Heart right ventricle (tissue), 16 donors: ENCODE measurements at regions of chr2 and their contacts with region 1.

Region 1: DNA sequence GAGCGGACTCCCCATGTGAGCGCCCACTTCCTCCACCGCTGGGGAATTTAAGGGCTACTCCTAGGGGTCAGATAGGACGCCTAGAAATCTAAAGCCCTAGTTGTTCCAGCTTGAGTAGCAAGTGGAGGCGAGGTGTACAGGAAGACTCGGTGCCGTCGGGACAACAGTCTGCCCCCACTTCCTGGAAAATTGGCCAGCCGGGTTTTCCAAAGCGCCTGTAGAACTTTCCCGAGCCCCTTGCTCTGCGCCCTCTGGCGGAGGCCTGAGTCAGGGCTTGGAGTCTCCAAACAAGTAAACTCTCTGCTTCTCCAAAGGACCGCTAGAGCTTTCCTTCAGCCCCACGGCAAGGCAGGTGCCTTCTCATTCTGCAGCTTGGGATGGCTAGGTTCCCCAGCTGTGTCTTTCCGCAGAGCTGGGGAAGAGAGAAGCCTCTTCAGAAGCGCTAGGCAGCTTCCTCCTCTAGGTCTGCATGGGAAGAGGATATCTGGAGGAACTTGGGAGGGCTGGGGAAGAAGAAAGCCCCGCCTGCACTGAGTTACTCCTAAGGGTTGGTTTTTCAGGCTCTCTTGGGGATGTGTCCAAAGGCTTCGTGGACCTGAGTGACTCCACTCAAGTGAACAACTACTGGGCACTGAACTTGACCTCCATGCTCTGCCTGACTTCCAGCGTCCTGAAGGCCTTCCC is 688 bp downstream of the SPR start:
- DNase-seq: peak; percentile 91 to 92
- ATAC-seq: peak; percentile 62 to 88 (median 76)
- H3K4me3 ChIP-seq: peak overlapping the region; percentile 59 to 79 (median 67)
- H3K27ac ChIP-seq: peak overlapping the region; percentile 78 to 97 (median 92)
- H3K4me1 ChIP-seq: peaks cover 10 to 42% (median 27%) of the 10 kb centered on the region in 9 donors
- H3K27me3 ChIP-seq: peaks cover 0 to 30% (median 0%) of the 10 kb centered on the region in 7 donors
- CTCF ChIP-seq: peak; percentile 84 to 97 (median 93)

Region 2: GRCh38 chr2:71545572-71546274 is 1342.2 kb before region 1 on chr2:
- intact Hi-C with region 1: loop called in 1 of 10 experiments (anchors 10 kb)
- DNase-seq: peak in 1 of 2 donors; percentile 55
- ATAC-seq: peak; percentile 59 to 83 (median 78)
- H3K4me3 ChIP-seq: peak overlapping the region in 6 of 10 donors; percentile 15 to 30 (median 24)
- H3K27ac ChIP-seq: peak overlapping the region in 9 of 10 donors; percentile 34 to 79 (median 71)
- H3K4me1 ChIP-seq: peaks cover 0 to 17% (median 13%) of the 10 kb centered on the region in 9 donors
- H3K27me3 ChIP-seq: no peaks in the 10 kb centered on the region
- CTCF ChIP-seq: peak; percentile 66 to 83 (median 75)

Region 3: GRCh38 chr2:72793798-72794440 is 94.0 kb before region 1 on chr2:
- intact Hi-C with region 1: no loop called
- DNase-seq: peak in 1 of 2 donors; percentile 21
- ATAC-seq: peak; percentile 56 to 92 (median 84)
- H3K4me3 ChIP-seq: peak overlapping the region in 1 of 10 donors; percentile 3
- H3K27ac ChIP-seq: peak overlapping the region in 9 of 10 donors; percentile 24 to 72 (median 57)
- H3K4me1 ChIP-seq: peaks cover 0 to 57% (median 30%) of the 10 kb centered on the region in 9 donors
- H3K27me3 ChIP-seq: no peaks in the 10 kb centered on the region
- CTCF ChIP-seq: no peak

Region 4: DNA sequence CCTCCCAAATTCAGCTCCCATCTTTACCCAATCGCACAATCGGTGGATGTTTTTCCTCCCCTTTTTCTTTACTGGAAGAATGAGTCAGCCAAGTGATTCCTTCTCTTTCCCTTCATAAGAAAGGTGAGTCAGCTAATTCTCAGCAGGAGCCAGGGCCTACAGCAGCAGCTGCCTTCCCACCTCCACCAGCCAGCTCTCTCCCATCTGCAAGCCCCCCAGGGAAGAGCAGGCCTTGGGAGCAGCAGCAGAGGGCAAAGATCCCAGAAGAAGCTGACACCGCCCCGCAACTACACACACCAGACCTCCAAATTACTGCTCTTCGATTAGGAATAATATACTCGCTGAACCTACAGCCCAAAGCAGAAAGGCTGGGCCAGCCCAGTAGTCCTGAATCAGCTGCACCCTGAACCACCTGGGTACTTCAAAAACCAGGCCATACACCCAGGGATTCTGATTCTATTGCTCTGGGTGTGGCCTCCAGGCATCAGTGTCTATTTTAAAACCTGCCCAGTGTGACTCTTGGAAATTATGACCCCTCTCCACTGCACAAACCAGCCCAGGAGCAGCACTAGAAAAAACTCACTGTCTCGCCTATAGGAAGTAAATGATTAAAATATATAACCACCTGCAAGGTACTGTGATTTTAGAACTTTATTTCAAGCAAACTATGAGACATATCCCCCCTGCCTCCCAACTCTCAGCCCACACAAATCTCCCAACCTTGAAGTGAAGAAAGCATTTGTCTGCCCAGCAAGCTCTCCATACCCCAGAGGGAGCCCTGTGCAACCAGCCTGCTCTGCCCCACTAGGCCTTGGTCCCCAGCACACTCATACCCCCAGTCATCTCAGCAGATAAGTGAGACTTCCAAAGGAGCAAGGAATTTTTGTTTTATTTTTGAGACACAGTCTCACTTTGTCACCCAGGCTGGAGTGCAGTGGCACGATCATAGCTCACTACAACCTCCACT is 176.3 kb after region 1 on chr2:
- intact Hi-C with region 1: loop called in 1 of 10 experiments (anchors 10 kb)
- DNase-seq: no peak
- ATAC-seq: peak in 7 of 8 donors; percentile 55 to 80 (median 68)
- H3K4me3 ChIP-seq: no peak overlapping the region
- H3K27ac ChIP-seq: peak overlapping the region in 8 of 10 donors; percentile 16 to 81 (median 42)
- H3K4me1 ChIP-seq: peaks cover 2 to 32% (median 16%) of the 10 kb centered on the region in 9 donors
- H3K27me3 ChIP-seq: no peaks in the 10 kb centered on the region
- CTCF ChIP-seq: no peak

Region 5: GRCh38 chr2:73085691-73086360 is 197.9 kb after region 1 on chr2:
- intact Hi-C with region 1: loop called in 4 of 10 experiments (anchors 10 kb)
- DNase-seq: peak; percentile 81 to 84
- ATAC-seq: peak; percentile 57 to 84 (median 66)
- H3K4me3 ChIP-seq: no peak overlapping the region
- H3K27ac ChIP-seq: no peak overlapping the region
- H3K4me1 ChIP-seq: peaks cover 0 to 54% (median 20%) of the 10 kb centered on the region in 9 donors
- H3K27me3 ChIP-seq: no peaks in the 10 kb centered on the region
- CTCF ChIP-seq: peak; percentile 82 to 98 (median 94)

Region 6: DNA sequence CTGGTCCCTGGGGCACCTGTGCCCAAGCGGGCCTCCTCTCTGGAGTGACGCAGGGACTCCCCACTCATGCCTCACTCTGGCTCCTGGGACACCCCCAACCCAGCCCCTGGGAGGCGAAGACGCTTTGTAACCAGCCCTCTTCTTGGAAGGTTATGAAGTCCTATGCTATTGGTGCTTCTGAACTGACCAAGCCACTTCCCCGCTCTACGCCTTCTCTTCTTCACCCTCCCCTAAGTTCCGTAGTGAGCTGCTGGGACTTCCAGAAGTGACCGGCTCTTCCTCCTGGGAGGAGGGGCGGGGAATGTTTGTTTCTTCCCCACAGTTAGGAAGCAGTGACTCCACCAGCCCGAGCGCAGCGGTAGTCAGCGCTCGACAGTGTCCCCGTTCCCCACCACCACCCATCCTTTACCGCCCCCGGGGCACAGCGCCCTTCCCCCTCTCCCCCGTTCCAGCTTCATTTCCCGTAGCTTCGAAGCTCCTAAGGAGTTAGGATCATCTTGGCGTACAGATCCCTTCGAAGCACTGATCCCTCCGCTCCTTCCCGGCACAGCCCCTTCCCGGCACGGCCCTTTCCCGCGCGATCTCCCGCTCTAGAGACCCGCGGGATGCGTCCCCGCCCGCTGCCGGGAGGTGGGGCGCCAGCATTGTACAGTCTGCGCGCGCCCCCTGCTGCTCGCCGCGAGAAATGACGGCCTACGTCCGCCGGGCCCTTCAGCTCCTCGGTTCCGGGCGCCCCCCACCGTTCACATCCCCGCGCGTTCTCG is 289.2 kb after region 1 on chr2:
- intact Hi-C with region 1: loop called in 6 of 10 experiments (anchors 2 to 5 kb)
- DNase-seq: peak; percentile 92
- ATAC-seq: peak; percentile 92 to 96 (median 94)
- H3K4me3 ChIP-seq: peak overlapping the region; percentile 26 to 75 (median 60)
- H3K27ac ChIP-seq: peak overlapping the region in 9 of 10 donors; percentile 71 to 89 (median 80)
- H3K4me1 ChIP-seq: peaks cover 4 to 31% (median 25%) of the 10 kb centered on the region in 9 donors
- H3K27me3 ChIP-seq: peaks cover 0 to 61% (median 27%) of the 10 kb centered on the region in 7 donors
- CTCF ChIP-seq: peak; percentile 97 to 99 (median 98)